Activated naive CD4-positive, alpha-beta T cell treated with anti-CD3 and anti-CD28 coated beads, Interleukin-2, amount 10 ng/mL, durations not matched to agents 7 days and 5 days (primary cell): ENCODE measurements at regions of chr11 and their contacts with region 1.

Region 1: DNA sequence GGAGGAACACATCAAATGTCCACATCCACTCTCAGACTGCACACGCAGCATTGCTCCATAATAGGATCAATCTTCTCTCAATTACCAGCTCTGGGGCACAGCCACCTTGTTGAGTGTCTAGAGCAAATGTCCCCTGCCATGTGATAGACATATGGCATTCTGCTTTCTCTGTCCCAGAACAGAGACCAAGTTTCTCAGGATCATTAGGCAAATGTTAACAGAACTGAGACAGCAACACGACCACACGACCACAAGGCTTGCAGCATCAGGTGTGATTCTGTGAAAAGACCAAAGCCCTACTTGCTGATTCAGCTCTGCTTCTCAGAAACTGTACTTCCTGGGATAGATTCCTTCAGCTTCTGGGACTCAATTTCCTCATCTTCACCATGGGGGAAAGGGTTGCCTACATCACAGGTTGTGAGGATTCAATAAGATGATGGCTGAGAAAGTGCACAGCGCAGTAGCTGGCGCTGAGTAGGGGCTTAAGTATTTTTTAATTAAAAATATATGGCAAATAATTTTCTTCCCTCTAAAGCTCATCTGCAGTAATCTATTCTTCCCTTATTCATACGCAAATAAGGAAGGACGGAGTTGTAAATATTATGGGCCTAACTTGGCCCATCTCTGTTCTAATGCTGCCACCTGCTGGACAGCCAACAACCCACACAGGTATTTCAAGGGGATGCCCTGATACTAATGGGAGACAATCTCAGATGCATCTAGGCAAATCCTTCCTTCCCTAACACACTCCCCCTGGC is 54.3 kb upstream of the USP47 start:
- DNase-seq: peak; percentile 80
- H3K4me3 Mint-ChIP-seq: no peak overlapping the region
- H3K27ac Mint-ChIP-seq: no peak overlapping the region
- H3K4me1 Mint-ChIP-seq: no peaks in the 10 kb centered on the region
- H3K27me3 Mint-ChIP-seq: peaks cover 7% of the 10 kb centered on the region

Region 2: GRCh38 chr11:10933455-10934292 is 853.8 kb before region 1 on chr11:
- CTCF ChIA-PET with region 1: interaction called, 10 read pairs
- DNase-seq: peak; percentile 87
- H3K4me3 Mint-ChIP-seq: peak overlapping the region; percentile 58
- H3K27ac Mint-ChIP-seq: no peak overlapping the region
- H3K4me1 Mint-ChIP-seq: peaks cover 27% of the 10 kb centered on the region
- H3K27me3 Mint-ChIP-seq: peaks cover 77% of the 10 kb centered on the region

Region 3: GRCh38 chr11:11036848-11037732 is 750.4 kb before region 1 on chr11:
- CTCF ChIA-PET with region 1: interaction called, 22 read pairs
- DNase-seq: peak; percentile 43
- H3K4me3 Mint-ChIP-seq: no peak overlapping the region
- H3K27ac Mint-ChIP-seq: peak overlapping the region; percentile 63
- H3K4me1 Mint-ChIP-seq: peaks cover 5% of the 10 kb centered on the region
- H3K27me3 Mint-ChIP-seq: peaks cover 8% of the 10 kb centered on the region